ENCODE measurements at regions of chr17 and their contacts with region 1.

Region 1: GRCh38 chr17:48804925-48805411 is 12.1 kb downstream of the TTLL6 start:
- DNase-seq: peak; percentile 87
- H3K4me3 ChIP-seq: peak overlapping the region; percentile 24
- H3K27ac ChIP-seq: peak overlapping the region; percentile 89
- H3K4me1 ChIP-seq: peaks cover 50% of the 10 kb centered on the region
- H3K27me3 ChIP-seq: no peaks in the 10 kb centered on the region
- CTCF ChIP-seq: peak; percentile 96

Region 2: GRCh38 chr17:48671697-48672171 is 133.2 kb before region 1 on chr17:
- CTCF ChIA-PET with region 1: interaction called, 7 read pairs
- POLR2A ChIA-PET with region 1: no interaction called
- intact Hi-C with region 1: loop called (anchors 5 kb)
- DNase-seq: peak; percentile 90
- H3K4me3 ChIP-seq: peak overlapping the region; percentile 42
- H3K27ac ChIP-seq: peak overlapping the region; percentile 52
- H3K4me1 ChIP-seq: peaks cover 6% of the 10 kb centered on the region
- H3K27me3 ChIP-seq: no peaks in the 10 kb centered on the region
- CTCF ChIP-seq: peak; percentile 92

Region 3: DNA sequence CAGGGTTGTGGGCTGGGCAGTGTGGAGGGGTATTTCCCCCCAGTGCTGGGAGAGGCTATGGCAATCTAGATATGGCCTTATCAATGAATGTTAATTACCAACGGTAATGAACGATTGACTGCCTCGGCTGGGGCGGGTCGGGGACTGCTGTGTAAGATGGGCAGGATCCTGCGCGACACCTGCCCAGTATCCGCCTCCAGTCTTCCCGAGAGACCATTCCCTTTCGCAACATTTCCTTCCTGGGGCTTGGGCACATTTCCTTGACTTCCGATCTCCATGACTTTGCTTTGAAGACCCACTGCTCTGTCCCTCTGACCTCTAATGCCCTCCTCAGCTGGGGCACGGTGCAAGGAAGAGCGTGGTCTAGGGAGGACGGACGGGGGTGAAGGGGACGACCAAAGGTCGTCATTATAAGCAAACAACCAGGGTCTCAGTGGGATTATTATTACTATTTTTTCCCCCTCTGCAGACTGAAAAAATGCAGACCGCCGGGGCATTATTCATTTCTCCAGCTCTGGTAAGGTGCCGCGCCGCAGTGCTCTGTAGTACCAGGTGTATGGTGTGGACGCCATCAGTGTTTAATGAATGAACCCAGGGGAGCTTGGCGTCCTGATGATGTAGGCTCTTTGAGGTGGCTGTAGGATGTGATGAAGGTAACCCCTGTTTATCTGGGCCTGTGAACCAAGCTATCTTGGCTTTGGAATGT is 88.1 kb after region 1 on chr17:
- CTCF ChIA-PET with region 1: no interaction called
- POLR2A ChIA-PET with region 1: interaction called, 16 read pairs
- intact Hi-C with region 1: no loop called
- DNase-seq: peak; percentile 58
- H3K4me3 ChIP-seq: peak overlapping the region; percentile 67
- H3K27ac ChIP-seq: peak overlapping the region; percentile 75
- H3K4me1 ChIP-seq: peaks cover 11% of the 10 kb centered on the region
- H3K27me3 ChIP-seq: no peaks in the 10 kb centered on the region
- CTCF ChIP-seq: no peak

Region 4: DNA sequence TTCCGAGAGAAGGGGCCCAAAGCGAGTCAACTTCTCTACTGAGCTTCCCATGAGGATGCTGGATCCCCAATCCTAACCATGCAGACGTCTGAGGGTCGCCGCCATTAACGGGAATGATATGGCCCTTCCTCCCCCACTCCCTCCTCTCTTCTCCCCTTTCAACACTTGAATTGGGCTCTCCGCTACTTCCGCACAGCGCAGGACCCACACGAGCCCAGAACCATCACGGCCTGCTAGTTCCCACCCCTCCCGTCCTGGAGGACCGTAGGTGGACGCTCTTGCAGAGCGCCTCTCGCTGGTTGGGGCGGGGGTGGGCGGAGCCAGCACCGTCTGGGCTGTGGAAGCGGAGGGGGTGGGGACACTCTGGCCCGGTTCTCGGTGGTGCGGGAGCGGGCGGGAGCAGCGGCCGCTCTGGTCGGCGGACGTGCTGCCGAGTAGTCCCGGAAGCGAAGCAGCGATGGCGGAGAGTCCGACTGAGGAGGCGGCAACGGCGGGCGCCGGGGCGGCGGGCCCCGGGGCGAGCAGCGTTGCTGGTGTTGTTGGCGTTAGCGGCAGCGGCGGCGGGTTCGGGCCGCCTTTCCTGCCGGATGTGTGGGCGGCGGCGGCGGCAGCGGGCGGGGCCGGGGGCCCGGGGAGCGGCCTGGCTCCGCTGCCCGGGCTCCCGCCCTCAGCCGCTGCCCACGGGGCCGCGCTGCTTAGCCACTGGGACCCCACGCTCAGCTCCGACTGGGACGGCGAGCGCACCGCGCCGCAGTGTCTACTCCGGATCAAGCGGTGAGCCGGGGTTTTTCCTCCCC is 103.3 kb after region 1 on chr17 and contains the start of gene UBE2Z:
- CTCF ChIA-PET with region 1: no interaction called
- POLR2A ChIA-PET with region 1: no interaction called
- intact Hi-C with region 1: no loop called
- DNase-seq: peak; percentile 98
- H3K4me3 ChIP-seq: peak within 1 kb of the TSS; percentile 89
- H3K27ac ChIP-seq: peak within 1 kb of the TSS; percentile 94
- H3K4me1 ChIP-seq: peaks cover 16% of the 10 kb centered on the region
- H3K27me3 ChIP-seq: no peaks in the 10 kb centered on the region
- CTCF ChIP-seq: peak; percentile 42
- total RNA-seq, gene UBE2Z: 108 and 114 TPM in 2 replicates

Measured in A673 (cell line).